Heart left ventricle (tissue), 16 donors: ENCODE measurements at regions of chr10 and their contacts with region 1.

Region 1: GRCh38 chr10:6364893-6365292 is 162.2 kb downstream of the PFKFB3 start:
- DNase-seq: peak in 1 of 5 donors; percentile 32
- ATAC-seq: peak; percentile 81 to 96 (median 86)
- H3K4me3 ChIP-seq: no peak overlapping the region
- H3K27ac ChIP-seq: no peak overlapping the region
- H3K4me1 ChIP-seq: peaks cover 0 to 10% (median 0%) of the 10 kb centered on the region in 12 donors
- H3K27me3 ChIP-seq: no peaks in the 10 kb centered on the region
- CTCF ChIP-seq: no peak
- POLR2A ChIP-seq: no peak

Region 2: GRCh38 chr10:6300106-6300783 is 64.6 kb before region 1 on chr10:
- intact Hi-C with region 1: loop called in 1 of 10 experiments (anchors 10 kb)
- DNase-seq: peak in 1 of 5 donors; percentile 41
- ATAC-seq: peak in 3 of 4 donors; percentile 50 to 77 (median 72)
- H3K4me3 ChIP-seq: peak overlapping the region in 1 of 12 donors; percentile 5
- H3K27ac ChIP-seq: peak overlapping the region in 2 of 12 donors; percentile 27 to 86
- H3K4me1 ChIP-seq: peaks cover 0 to 36% (median 0%) of the 10 kb centered on the region in 12 donors
- H3K27me3 ChIP-seq: no peaks in the 10 kb centered on the region
- CTCF ChIP-seq: no peak
- POLR2A ChIP-seq: no peak